Heart left ventricle (tissue), 16 donors: ENCODE measurements at regions of chr6 and their contacts with region 1.

Region 1: DNA sequence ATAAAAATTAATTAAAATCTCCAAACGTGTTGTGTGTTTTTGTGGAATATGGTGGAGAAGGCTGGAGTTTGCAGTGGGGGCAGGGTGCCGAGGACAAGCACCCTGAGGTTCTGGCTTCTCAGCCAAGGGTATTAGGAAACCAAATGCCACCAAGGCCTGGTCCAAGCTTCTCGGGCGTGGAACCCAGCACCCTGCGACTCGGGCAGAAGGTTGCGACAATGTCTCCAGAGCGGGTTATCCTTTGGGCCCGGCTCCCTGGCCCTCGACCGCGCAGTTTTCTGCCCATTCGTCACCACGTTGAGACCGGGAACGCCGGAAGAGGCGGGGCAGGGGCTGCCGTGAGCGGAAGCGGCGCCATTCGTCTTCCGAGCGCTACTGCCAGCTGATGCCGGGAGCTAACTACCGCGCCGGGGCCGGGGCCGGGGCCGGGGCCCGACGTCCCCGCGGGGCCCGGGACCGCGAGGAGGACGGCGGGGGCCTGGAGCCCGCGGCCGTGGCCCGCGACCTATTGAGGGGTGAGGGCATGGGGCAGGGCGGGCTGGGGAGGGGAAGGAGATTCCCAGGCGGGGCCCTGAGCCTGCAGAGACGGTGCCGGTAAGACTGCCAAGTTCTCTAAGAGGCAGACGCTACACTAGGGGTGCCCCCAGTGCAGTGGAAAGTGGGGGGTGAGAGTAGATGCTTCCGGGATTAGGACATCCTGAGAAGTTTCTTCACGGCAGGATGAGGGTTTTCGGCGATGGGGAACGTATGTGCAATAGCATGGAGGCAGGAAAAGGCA is at the start of gene RRP36:
- DNase-seq: peak; percentile 81 to 91 (median 86)
- ATAC-seq: peak; percentile 42 to 89 (median 83)
- H3K4me3 ChIP-seq: peak within 1 kb of the TSS; percentile 72 to 98 (median 92)
- H3K27ac ChIP-seq: peak within 1 kb of the TSS; percentile 7 to 96 (median 87)
- H3K4me1 ChIP-seq: peaks cover 0 to 58% (median 41%) of the 10 kb centered on the region in 12 donors
- H3K27me3 ChIP-seq: no peaks in the 10 kb centered on the region
- CTCF ChIP-seq: no peak
- POLR2A ChIP-seq: peak in 1 of 2 donors; percentile 47
- total RNA-seq, gene RRP36: 22.7 to 36.5 (median 32.3) TPM

Region 2: DNA sequence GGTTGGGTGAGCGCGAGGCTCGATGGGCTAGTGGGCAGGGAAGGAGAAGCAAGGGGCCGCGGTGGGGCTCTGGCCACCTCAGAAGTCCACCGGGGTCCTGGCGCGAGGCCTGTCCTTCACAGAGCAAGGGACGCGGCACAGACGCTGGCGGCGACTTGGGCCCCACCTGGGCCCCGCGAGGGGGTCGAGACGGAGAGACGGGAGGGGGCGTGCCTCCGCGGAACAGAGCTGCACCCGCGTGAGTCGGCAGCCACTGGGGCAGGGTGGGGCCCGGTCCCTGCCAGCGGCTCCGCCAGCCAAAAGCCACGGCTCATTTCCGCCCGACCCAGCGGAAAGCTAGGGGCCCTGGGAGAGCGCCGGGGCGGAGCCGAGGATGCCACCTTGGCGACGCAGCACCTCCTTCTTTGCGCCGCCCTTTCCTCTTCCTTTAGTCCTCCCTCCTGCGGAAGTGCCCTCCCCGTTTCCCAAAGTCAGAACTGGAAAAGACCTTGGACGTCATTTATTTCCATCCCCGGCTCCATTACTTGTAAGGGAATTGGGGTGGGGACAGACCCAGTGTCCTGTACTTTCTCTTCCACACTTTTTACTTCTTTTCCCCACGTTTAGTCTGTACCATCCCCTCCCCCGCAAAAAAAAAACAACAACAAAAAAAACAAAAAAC is 32.2 kb after region 1 on chr6 and contains the start of gene CUL7:
- intact Hi-C with region 1: loop called in 5 of 10 experiments (anchors 2 to 5 kb)
- DNase-seq: peak; percentile 93 to 96 (median 96)
- ATAC-seq: peak; percentile 92 to 97 (median 96)
- H3K4me3 ChIP-seq: peak within 1 kb of the TSS; percentile 36 to 87 (median 74)
- H3K27ac ChIP-seq: peak within 1 kb of the TSS; percentile 81 to 97 (median 94)
- H3K4me1 ChIP-seq: peaks cover 0 to 34% (median 18%) of the 10 kb centered on the region in 12 donors
- H3K27me3 ChIP-seq: no peaks in the 10 kb centered on the region
- CTCF ChIP-seq: peak in 3 of 12 donors; percentile 3 to 12 (median 7)
- POLR2A ChIP-seq: peak in 1 of 2 donors; percentile 83
- total RNA-seq, gene CUL7: 5.6 to 13.2 (median 7.9) TPM